Adrenal gland (tissue), 19 donors: ENCODE measurements at regions of chr12 and their contacts with region 1.

Region 1: GRCh38 chr12:12696562-12697383 is 790 bp upstream of the GPR19 start:
- DNase-seq: peak; percentile 91 to 98 (median 93)
- H3K4me3 ChIP-seq: peak overlapping the region in 2 of 4 donors; percentile 49 to 61
- H3K27ac ChIP-seq: peak overlapping the region; percentile 70 to 95 (median 90)
- H3K4me1 ChIP-seq: peaks cover 0 to 10% of the 10 kb centered on the region in 2 donors
- H3K27me3 ChIP-seq: no peaks in the 10 kb centered on the region
- CTCF ChIP-seq: no peak
- POLR2A ChIP-seq: peak in 1 of 2 donors; percentile 86

Region 2: GRCh38 chr12:12562585-12563261 is 134.1 kb before region 1 on chr12 and contains the start of gene DUSP16:
- intact Hi-C with region 1: loop called in 1 of 2 experiments (anchors 5 kb)
- DNase-seq: peak; percentile 92 to 97 (median 94)
- H3K4me3 ChIP-seq: peak within 1 kb of the TSS; percentile 49 to 99 (median 74)
- H3K27ac ChIP-seq: peak within 1 kb of the TSS; percentile 98 to 100 (median 99)
- H3K4me1 ChIP-seq: peaks cover 15 to 23% of the 10 kb centered on the region in 2 donors
- H3K27me3 ChIP-seq: no peaks in the 10 kb centered on the region
- CTCF ChIP-seq: peak in 4 of 6 experiments; percentile 29 to 46 (median 32)
- POLR2A ChIP-seq: peak; percentile 88 to 96
- total RNA-seq, gene DUSP16: 36.4 to 374 (median 110) TPM

Region 3: DNA sequence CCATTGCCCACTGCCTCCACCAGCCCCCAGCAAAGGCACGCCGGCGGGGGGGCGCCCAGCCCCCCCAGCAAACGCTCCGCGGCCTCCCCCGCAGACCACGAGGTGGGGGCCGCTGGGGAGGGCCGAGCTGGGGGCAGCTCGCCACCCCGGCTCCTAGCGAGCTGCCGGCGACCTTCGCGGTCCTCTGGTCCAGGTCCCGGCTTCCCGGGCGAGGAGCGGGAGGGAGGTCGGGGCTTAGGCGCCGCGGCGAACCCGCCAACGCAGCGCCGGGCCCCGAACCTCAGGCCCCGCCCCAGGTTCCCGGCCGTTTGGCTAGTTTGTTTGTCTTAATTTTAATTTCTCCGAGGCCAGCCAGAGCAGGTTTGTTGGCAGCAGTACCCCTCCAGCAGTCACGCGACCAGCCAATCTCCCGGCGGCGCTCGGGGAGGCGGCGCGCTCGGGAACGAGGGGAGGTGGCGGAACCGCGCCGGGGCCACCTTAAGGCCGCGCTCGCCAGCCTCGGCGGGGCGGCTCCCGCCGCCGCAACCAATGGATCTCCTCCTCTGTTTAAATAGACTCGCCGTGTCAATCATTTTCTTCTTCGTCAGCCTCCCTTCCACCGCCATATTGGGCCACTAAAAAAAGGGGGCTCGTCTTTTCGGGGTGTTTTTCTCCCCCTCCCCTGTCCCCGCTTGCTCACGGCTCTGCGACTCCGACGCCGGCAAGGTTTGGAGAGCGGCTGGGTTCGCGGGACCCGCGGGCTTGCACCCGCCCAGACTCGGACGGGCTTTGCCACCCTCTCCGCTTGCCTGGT is 20.2 kb after region 1 on chr12 and contains the start of gene CDKN1B:
- intact Hi-C with region 1: no loop called
- DNase-seq: peak; percentile 92 to 96 (median 93)
- H3K4me3 ChIP-seq: peak within 1 kb of the TSS; percentile 88 to 99 (median 92)
- H3K27ac ChIP-seq: peak within 1 kb of the TSS; percentile 94 to 100 (median 97)
- H3K4me1 ChIP-seq: peaks cover 26 to 49% of the 10 kb centered on the region in 2 donors
- H3K27me3 ChIP-seq: no peaks in the 10 kb centered on the region
- CTCF ChIP-seq: no peak
- POLR2A ChIP-seq: peak; percentile 55 to 90
- total RNA-seq, gene CDKN1B: 37.9 to 97.8 (median 64.4) TPM